Cardiac septum (tissue), 1 donor: ENCODE measurements at regions of chr1 and their contacts with region 1.

Region 1: GRCh38 chr1:165768513-165769394 is at the start of gene TMCO1:
- DNase-seq: peak; percentile 98
- total RNA-seq, gene TMCO1: 53.4 TPM

Region 2: DNA sequence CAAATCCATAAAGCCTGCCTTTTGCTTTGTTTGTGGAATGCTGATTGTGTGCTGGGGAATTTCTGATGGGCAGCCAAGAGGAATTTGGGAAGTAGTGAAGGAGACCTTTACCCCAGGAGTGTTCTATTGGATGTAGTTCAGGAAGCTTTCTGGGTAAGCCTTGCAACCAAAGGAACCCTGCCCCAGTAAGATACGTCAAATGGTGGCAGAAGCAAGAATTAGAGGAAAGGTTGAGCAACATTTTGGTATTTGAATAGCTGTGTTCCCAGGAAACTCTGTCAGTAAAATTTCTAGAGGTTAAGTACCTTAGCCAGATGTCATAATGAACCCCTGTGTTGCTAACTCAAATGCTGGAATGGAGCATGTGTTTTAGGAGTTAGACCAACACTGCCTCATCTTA is 131.3 kb before region 1 on chr1:
- intact Hi-C with region 1: loop called (anchors 5 kb)
- DNase-seq: no peak

Region 3: GRCh38 chr1:165697881-165698760 is 70.6 kb before region 1 on chr1 and contains the start of gene ALDH9A1:
- intact Hi-C with region 1: loop called (anchors 2 kb)
- DNase-seq: peak; percentile 96
- total RNA-seq, gene ALDH9A1: 61.3 TPM

Region 4: DNA sequence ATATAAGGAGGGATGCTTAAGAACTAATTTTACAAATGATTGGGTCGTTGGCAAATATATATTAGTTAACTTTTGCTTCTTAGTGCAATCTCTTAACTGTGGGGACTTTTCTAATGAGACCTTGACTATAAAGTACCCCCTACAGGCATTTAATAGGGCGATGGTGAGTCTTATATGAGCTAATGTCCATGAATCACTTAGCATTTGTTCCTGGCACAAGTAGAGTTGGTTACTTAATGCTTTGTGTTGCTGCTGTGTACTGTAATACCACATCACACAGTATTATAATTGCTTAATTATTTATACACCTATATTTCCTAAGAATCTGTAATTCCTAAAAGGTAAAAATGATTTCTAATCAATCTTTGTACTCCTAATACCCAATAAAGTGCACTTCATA is 25.2 kb after region 1 on chr1:
- intact Hi-C with region 1: no loop called
- DNase-seq: no peak

Region 5: GRCh38 chr1:165827268-165828102 is 58.7 kb after region 1 on chr1 and contains the start of gene UCK2:
- intact Hi-C with region 1: loop called (anchors 1 kb)
- DNase-seq: peak; percentile 91
- total RNA-seq, gene UCK2: 32.0 TPM

Region 6: DNA sequence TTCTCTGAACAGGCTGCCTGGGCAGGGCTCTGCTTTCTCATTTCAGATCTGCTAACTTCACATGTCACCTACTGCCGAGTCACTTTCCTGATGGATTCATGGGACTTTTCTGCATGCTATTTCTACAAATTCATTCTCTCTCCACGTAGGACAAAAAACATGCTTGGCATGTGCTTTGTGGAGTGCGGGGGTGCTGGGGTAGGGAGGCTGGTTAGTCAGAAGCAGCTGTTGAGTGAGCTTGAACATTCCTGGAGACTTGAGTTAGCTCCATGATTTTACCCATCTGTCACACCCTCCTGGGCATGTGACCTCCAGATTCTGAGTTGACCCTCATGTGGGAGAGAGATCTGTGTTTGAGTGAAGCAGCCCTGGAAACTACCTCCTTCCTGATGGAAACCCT is 130.1 kb after region 1 on chr1:
- intact Hi-C with region 1: loop called (anchors 5 kb)
- DNase-seq: no peak